Natural killer cell (primary cell): ENCODE measurements at regions of chr4 and their contacts with region 1.

Region 1: GRCh38 chr4:1167247-1167949 is 5.0 kb downstream of the SPON2 start:
- DNase-seq: peak; percentile 89 to 97
- ATAC-seq: peak; percentile 79 to 92 (median 82)
- H3K4me3 ChIP-seq: peak overlapping the region; percentile 81
- H3K4me3 Mint-ChIP-seq: peak overlapping the region; percentile 94
- H3K27ac ChIP-seq: peak overlapping the region; percentile 89
- H3K27ac Mint-ChIP-seq: peak overlapping the region; percentile 88 to 96
- H3K4me1 ChIP-seq: peaks cover 64% of the 10 kb centered on the region
- H3K4me1 Mint-ChIP-seq: peaks cover 49% of the 10 kb centered on the region in 2 donors
- H3K27me3 ChIP-seq: no peaks in the 10 kb centered on the region
- H3K27me3 Mint-ChIP-seq: no peaks in the 10 kb centered on the region
- CTCF ChIP-seq: peak; percentile 99

Region 2: DNA sequence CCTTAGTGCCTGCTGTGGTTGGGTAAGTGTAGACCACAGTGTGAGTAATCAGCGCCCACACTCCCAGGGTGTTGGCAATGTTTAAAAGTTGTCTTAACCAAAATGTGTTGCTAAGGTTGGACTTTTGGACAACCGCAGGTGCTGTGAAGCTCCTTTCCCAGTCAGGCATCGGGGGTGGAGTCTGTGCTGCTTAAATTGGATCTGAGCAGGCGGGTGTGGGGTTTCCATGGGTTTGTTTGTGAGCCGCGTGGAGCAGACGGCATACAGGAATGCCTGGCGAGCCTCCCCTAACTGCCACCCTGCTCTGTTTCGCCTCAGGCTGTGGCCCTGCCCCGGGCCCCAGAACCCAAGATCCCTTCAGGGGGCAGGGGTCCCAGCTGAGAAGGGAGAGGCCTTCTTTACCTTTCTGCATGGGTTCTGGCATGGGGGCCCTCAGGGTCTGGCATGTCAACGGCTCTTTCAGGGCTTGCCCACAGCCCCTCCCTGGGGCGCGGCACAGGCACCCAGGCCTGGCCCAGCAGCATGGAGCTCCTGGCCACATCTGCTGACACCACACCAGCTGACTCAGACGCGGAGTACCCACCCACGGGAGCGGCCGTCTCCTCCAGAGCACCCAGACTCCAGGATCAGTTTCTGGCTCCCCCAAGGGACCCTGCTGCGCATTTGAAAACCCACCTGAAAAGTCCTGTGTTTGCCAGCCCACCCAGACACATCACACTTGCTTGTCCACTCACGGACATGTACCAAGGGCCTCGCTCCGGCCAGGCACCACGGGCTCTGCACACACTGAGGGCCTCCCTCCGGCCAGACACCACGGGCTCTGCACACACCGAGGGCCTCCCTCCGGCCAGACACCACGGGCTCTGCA is 10.1 kb after region 1 on chr4:
- intact Hi-C with region 1: loop called (anchors 1 kb)
- DNase-seq: peak; percentile 79 to 87
- ATAC-seq: peak; percentile 61 to 87 (median 85)
- H3K4me3 ChIP-seq: peak overlapping the region; percentile 15
- H3K4me3 Mint-ChIP-seq: peak overlapping the region; percentile 2
- H3K27ac ChIP-seq: peak overlapping the region; percentile 82
- H3K27ac Mint-ChIP-seq: peak overlapping the region; percentile 9 to 79
- H3K4me1 ChIP-seq: peaks cover 71% of the 10 kb centered on the region
- H3K4me1 Mint-ChIP-seq: peaks cover 60 to 88% of the 10 kb centered on the region in 2 donors
- H3K27me3 ChIP-seq: peaks cover 3% of the 10 kb centered on the region
- H3K27me3 Mint-ChIP-seq: no peaks in the 10 kb centered on the region
- CTCF ChIP-seq: no peak

Region 3: DNA sequence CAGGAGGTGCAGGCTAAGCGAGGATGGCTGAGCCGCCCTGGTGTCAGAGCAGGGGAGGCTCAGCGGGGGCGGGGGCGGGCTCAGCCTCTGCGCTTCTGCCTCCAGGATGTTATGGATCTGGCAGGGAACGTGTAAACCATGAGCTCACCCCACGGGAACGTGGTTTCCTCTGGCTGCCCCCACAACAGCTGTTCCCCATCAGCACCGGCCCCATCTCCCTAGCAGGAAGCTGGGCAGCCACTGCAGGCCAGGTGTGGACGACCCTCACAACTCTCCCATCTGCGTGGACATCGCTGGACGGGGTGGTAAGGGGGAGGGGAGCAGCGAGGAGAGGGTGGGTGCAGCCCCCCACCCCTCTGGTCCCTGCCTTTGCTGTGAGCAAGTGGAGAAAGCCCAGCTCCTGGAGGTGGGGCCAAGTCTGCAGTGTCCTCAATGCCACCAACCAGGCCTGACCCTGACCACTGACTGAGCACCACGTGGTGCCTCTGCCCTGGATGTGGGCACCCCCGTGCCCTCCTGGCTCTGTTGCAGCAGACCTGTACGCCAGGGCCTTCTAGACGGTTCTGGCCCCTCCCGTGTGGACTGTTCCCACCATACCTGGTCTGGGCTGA is 33.1 kb after region 1 on chr4:
- intact Hi-C with region 1: loop called (anchors 1 kb)
- DNase-seq: peak in 1 of 2 donors; percentile 57
- ATAC-seq: peak in 1 of 3 donors; percentile 4
- H3K4me3 ChIP-seq: peak overlapping the region; percentile 62
- H3K4me3 Mint-ChIP-seq: peak overlapping the region; percentile 87
- H3K27ac ChIP-seq: peak overlapping the region; percentile 89
- H3K27ac Mint-ChIP-seq: peak overlapping the region; percentile 98 to 100
- H3K4me1 ChIP-seq: peaks cover 94% of the 10 kb centered on the region
- H3K4me1 Mint-ChIP-seq: peaks cover 75 to 82% of the 10 kb centered on the region in 2 donors
- H3K27me3 ChIP-seq: no peaks in the 10 kb centered on the region
- H3K27me3 Mint-ChIP-seq: no peaks in the 10 kb centered on the region
- CTCF ChIP-seq: no peak

Region 4: DNA sequence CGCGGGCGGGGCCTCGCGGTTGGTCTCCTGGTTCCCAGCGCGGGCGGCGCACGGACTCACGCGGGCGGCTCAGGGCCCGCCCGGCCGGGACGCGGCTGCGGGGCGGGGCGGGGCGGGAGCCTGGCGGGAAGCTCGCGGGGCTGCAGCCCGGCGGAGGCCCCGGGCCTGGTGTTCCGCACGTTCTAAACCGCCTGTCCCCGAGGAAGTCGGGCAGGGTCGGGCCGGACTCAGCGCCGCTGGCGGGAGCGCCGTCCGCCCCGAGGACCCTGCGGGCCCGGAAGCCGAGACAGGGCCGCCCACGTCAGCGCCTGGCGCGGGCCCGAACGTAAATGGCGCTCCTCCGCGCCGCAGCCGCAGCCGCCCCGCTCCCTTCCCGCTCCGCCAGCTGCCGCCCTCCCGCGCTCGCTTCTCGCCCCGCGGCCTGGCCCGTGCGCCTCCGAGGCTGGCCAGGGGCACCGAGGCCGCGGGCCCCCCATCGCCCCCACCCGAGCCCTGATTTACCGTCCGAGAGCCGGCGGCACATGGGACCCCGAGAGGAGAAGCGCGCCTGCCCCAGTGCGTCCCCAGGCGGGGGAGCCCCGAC is 81.8 kb after region 1 on chr4:
- intact Hi-C with region 1: loop called (anchors 1 kb)
- DNase-seq: peak; percentile 86 to 94
- ATAC-seq: peak; percentile 63 to 81 (median 70)
- H3K4me3 ChIP-seq: peak overlapping the region; percentile 64
- H3K4me3 Mint-ChIP-seq: peak overlapping the region; percentile 91
- H3K27ac ChIP-seq: peak overlapping the region; percentile 96
- H3K27ac Mint-ChIP-seq: peak overlapping the region; percentile 92 to 97
- H3K4me1 ChIP-seq: peaks cover 80% of the 10 kb centered on the region
- H3K4me1 Mint-ChIP-seq: peaks cover 69 to 78% of the 10 kb centered on the region in 2 donors
- H3K27me3 ChIP-seq: no peaks in the 10 kb centered on the region
- H3K27me3 Mint-ChIP-seq: no peaks in the 10 kb centered on the region
- CTCF ChIP-seq: no peak

Region 5: DNA sequence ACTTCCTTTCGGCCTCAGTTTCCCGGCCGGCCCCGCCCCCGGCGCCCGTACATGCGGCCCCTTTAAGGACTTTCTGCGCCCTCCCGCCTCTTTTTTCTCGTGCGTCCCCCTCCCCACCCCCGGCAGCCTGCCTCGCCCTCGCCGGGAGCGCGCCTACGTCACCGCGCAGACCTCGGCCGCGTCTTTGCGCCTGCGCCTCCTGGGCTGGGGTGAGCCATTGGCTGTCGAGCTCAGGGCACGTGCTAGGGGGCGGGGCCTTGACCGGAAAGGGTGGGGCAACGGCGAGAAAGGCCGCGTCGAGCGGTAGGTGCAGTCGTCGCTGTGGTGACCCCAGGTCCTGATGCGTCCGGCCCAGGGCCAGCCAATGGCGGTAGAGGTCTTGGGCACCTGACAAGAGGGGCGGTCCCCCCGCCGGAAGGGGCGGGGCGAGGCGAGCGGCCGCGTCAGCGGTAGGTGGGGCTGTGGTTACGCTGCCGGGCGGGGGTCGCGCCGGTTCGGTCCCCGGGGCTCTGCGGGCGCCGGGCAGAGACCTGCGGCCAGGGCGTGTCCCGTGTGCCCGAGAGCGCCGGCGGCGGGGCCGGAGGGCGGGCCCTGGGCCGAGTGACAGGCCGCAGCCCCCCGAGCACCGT is 179.5 kb after region 1 on chr4 and contains the start of gene UVSSA:
- intact Hi-C with region 1: loop called (anchors 2 kb)
- DNase-seq: peak; percentile 100
- ATAC-seq: peak; percentile 90 to 98 (median 91)
- H3K4me3 ChIP-seq: peak within 1 kb of the TSS; percentile 79
- H3K4me3 Mint-ChIP-seq: peak within 1 kb of the TSS; percentile 90
- H3K27ac ChIP-seq: peak within 1 kb of the TSS; percentile 91
- H3K27ac Mint-ChIP-seq: peak within 1 kb of the TSS; percentile 89 to 91
- H3K4me1 ChIP-seq: peaks cover 31% of the 10 kb centered on the region
- H3K4me1 Mint-ChIP-seq: peaks cover 40 to 41% of the 10 kb centered on the region in 2 donors
- H3K27me3 ChIP-seq: no peaks in the 10 kb centered on the region
- H3K27me3 Mint-ChIP-seq: no peaks in the 10 kb centered on the region
- CTCF ChIP-seq: no peak
- total RNA-seq, gene UVSSA: 48.0 to 59.4 (median 56.4) TPM